ENCODE measurements at regions of chr12 and their contacts with region 1.

Region 1: DNA sequence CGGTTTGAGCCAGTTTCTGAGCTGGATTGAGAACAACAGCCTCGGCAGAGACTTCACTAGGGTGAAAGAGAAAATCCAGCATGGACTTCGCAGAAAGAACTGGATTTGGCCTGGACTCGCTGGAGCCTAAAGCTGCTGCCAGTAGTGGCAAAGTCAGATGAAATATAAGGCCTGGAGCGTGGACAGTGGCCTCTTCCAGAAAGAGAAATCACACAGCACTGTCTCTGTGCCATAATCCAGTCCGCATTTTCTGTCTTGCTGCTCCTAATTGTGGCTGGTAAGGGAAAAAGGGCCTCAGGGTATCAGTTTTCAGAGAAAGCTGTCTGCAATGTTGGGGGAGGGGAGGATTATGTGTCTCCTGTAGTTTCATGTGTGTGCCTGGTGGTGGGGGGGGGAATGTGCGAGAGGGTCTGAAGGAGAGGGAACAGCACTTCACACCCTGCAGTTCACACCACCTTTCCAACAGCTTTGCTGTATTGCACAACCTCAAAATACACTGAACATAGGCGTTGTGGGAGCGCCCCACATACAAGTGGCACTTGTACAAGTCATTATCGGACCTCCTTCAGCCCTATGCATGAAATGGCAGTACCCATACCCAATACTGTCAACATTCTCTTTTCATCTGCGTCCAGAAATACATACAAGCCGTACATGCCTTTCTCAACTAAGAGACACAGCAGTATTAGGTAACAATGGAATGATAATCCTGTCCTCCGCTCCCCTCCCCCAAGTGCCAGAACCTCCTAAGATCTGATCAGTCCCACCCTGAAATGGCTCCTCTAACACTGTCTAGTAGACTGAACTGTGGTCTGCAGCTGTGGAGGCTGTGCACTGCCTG is 107.5 kb upstream of the ATF7IP start:
- DNase-seq: peak; percentile 60 to 91 (median 84)
- ATAC-seq: peak; percentile 45
- H3K4me3 ChIP-seq: peak overlapping the region in 1 of 2 experiments; percentile 17
- H3K4me3 Mint-ChIP-seq: peak overlapping the region; percentile 73
- H3K27ac ChIP-seq: peak overlapping the region; percentile 72 to 87
- H3K27ac Mint-ChIP-seq: peak overlapping the region; percentile 99
- H3K4me1 ChIP-seq: peaks cover 39% of the 10 kb centered on the region
- H3K4me1 Mint-ChIP-seq: peaks cover 55% of the 10 kb centered on the region
- H3K27me3 ChIP-seq: no peaks in the 10 kb centered on the region
- H3K27me3 Mint-ChIP-seq: no peaks in the 10 kb centered on the region
- CTCF ChIP-seq: no peak

Region 2: DNA sequence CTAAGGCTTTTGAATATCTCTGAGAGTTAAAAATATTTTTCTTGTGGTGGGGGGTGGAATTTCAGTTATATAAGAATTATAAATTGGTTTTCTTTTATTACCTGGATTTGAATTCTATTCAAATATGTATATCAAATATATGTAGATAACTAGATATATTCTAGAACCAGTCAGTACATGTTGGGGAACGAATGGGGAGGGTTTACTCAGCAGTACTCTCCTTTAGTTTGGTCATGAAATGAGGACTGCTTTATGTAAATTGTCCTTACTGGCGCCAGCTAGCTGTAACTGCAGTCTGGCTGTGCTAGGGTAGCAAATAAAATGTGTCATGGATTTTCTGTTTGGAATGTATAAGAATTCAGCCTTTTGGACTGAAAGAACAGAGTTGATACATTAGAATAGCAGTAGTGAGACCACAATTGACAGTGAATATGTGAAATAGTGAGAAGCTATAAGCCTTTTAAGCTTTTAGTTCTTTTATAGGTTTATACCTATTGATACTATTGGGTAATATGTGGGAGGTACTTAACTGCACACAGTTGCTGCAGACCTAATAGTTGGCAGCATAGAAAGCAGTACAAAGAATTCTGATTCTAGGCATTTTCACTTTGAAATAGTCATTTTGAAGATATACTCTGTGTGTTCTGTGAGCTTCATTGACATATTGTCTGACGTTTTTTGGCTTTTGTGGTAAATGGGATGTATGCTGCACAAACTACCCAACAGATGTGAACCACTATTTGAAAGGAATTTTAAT is 136.5 kb after region 1 on chr12:
- CTCF ChIA-PET with region 1: interaction called, 5 read pairs
- POLR2A ChIA-PET with region 1: interaction called, 17 read pairs
- intact Hi-C with region 1: no loop called
- DNase-seq: peak in 5 of 9 experiments; percentile 35 to 89 (median 52)
- ATAC-seq: peak; percentile 61
- H3K4me3 ChIP-seq: peak overlapping the region in 1 of 2 experiments; percentile 19
- H3K4me3 Mint-ChIP-seq: peak overlapping the region; percentile 67
- H3K27ac ChIP-seq: peak overlapping the region; percentile 39 to 75
- H3K27ac Mint-ChIP-seq: peak overlapping the region; percentile 84
- H3K4me1 ChIP-seq: peaks cover 90% of the 10 kb centered on the region
- H3K4me1 Mint-ChIP-seq: peaks cover 83% of the 10 kb centered on the region
- H3K27me3 ChIP-seq: no peaks in the 10 kb centered on the region
- H3K27me3 Mint-ChIP-seq: no peaks in the 10 kb centered on the region
- CTCF ChIP-seq: no peak

Region 3: GRCh38 chr12:15404485-15404884 is 1146.5 kb after region 1 on chr12:
- CTCF ChIA-PET with region 1: no interaction called
- POLR2A ChIA-PET with region 1: no interaction called
- intact Hi-C with region 1: no loop called
- DNase-seq: no peak
- ATAC-seq: no peak
- H3K4me3 ChIP-seq: no peak overlapping the region
- H3K4me3 Mint-ChIP-seq: no peak overlapping the region
- H3K27ac ChIP-seq: no peak overlapping the region
- H3K27ac Mint-ChIP-seq: no peak overlapping the region
- H3K4me1 ChIP-seq: no peaks in the 10 kb centered on the region
- H3K4me1 Mint-ChIP-seq: no peaks in the 10 kb centered on the region
- H3K27me3 ChIP-seq: no peaks in the 10 kb centered on the region
- H3K27me3 Mint-ChIP-seq: peaks cover 3% of the 10 kb centered on the region
- CTCF ChIP-seq: no peak

Region 4: DNA sequence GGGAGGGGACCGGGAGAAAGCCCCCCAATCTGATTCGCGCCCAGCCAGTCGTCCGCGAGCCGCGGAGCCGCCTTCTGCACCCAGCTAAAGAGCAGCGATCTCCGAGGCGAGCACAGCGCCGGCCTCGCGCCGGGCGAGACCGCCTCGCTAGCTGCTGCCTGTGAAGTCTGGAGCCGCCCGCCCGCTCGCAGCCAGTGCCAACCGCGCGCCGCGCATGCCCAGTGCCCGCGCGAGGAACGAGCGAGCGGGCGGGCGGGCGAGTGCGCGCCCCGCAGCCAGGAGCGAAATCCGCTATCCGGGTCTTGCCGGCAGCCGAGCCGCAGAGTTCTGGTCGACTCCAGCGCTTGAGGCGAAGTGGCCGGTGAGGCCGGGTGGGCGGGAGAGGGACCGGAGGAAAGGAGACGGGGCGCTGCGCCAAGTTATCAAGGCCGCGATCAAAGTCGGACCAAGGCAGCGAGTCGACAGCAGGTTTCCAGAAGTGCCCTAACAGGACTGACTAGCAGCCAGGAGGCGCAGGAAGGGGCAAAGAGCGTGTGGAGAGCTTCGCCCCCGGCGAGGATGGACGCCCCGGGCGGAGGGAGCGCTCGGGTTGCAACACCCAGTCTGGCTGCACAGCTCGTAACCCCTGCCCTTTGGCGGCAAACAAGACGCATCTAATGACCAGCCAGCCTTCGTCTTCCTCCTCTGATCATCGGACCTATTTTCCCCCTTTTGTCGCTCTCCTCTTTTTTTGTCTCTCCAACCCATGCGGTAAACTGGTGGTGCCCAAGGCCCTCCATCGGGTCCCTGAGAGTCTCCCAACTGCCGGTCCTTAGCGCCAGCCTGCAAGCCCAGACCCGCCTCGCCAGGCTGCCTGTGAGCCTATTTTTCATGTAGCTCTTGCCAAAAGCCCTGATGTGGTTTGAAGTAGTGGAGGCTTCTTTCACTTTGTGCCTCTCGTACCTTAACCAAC is 1531.5 kb after region 1 on chr12 and contains the start of gene EPS8:
- CTCF ChIA-PET with region 1: no interaction called
- POLR2A ChIA-PET with region 1: no interaction called
- intact Hi-C with region 1: loop called in 1 of 2 experiments (anchors 5 kb)
- DNase-seq: peak; percentile 76 to 93 (median 87)
- ATAC-seq: peak; percentile 88
- H3K4me3 ChIP-seq: peak within 1 kb of the TSS; percentile 68 to 87
- H3K4me3 Mint-ChIP-seq: peak within 1 kb of the TSS; percentile 97
- H3K27ac ChIP-seq: peak within 1 kb of the TSS in 1 of 2 experiments; percentile 41
- H3K27ac Mint-ChIP-seq: peak within 1 kb of the TSS; percentile 42
- H3K4me1 ChIP-seq: peaks cover 8% of the 10 kb centered on the region
- H3K4me1 Mint-ChIP-seq: peaks cover 14% of the 10 kb centered on the region
- H3K27me3 ChIP-seq: peaks cover 8 to 15% of the 10 kb centered on the region in 2 experiments
- H3K27me3 Mint-ChIP-seq: peaks cover 39% of the 10 kb centered on the region
- CTCF ChIP-seq: no peak
- total RNA-seq, gene EPS8: 1.7 to 2.1 TPM

Measured in CD8-positive, alpha-beta T cell (primary cell).